ENCODE measurements at regions of chr1 and their contacts with region 1.

Region 1: GRCh38 chr1:114428083-114428749 is 82.8 kb downstream of the TRIM33 start:
- DNase-seq: no peak
- H3K4me3 ChIP-seq: no peak overlapping the region
- H3K27ac ChIP-seq: no peak overlapping the region
- H3K4me1 ChIP-seq: no peaks in the 10 kb centered on the region
- H3K27me3 ChIP-seq: no peaks in the 10 kb centered on the region
- CTCF ChIP-seq: no peak
- EP300 ChIP-seq: no peak
- POLR2A ChIP-seq: no peak

Region 2: DNA sequence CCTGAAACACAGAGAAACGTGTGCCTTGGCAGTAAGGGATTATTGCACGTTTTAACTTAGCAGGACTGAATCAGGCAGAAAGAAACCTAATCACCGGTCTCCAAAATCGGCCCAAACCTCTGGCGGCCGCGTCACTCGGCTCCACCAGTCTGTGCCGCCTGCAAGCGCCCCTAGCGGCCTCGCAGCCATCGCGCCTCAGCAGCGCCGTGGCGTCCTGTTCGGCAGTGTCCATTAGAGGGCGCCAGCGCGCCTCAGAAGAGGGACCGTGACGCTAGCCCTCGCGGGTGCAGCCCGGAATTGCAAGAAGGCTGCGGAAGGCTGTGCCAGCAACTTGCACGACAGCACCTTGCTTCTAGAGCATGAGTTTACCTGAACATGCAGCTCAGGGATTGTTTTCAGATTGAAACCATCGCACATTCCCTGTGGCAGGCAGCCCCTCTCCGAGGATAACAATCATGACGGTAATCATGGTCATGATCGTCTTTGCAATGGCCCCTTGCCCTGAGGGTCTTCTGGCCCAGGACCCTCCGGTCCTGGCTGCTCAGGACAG is 81.7 kb before region 1 on chr1:
- intact Hi-C with region 1: loop called in 1 of 4 experiments (anchors 5 kb)
- DNase-seq: peak; percentile 93 to 99 (median 96)
- H3K4me3 ChIP-seq: peak overlapping the region; percentile 41
- H3K27ac ChIP-seq: peak overlapping the region; percentile 69 to 78
- H3K4me1 ChIP-seq: no peaks in the 10 kb centered on the region
- H3K27me3 ChIP-seq: no peaks in the 10 kb centered on the region
- CTCF ChIP-seq: peak; percentile 100
- EP300 ChIP-seq: peak; percentile 17
- POLR2A ChIP-seq: no peak

Measured in ovary (tissue), 10 donors.